Activated naive CD4-positive, alpha-beta T cell treated with anti-CD3 and anti-CD28 coated beads, Interleukin-2, amount 10 ng/mL, durations not matched to agents 7 days and 5 days (primary cell): ENCODE measurements at regions of chr15 and their contacts with region 1.

Region 1: GRCh38 chr15:73273181-73274002 is 95.4 kb downstream of the HCN4 start:
- DNase-seq: peak; percentile 58
- H3K4me3 Mint-ChIP-seq: no peak overlapping the region
- H3K27ac Mint-ChIP-seq: no peak overlapping the region
- H3K4me1 Mint-ChIP-seq: no peaks in the 10 kb centered on the region
- H3K27me3 Mint-ChIP-seq: no peaks in the 10 kb centered on the region

Region 2: DNA sequence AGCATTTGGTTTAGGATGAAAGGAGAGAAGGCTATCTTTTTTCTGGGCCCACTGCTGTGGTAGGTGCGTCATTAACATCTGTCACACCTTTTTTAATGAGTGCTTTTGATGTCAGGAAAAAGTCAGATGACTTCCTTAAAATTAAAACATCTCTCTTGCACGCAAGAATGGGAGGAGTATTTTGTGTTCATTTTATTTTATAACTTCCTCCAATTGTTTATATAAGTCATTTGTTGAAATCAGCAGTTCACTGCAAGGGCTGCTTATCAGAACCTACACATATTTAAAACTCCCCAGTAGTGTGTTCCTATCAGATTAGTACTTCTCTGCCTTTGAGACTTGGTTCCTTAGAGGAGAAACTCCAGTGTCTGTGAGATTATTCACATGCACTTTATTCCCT is 77.3 kb before region 1 on chr15:
- CTCF ChIA-PET with region 1: no interaction called
- DNase-seq: no peak
- H3K4me3 Mint-ChIP-seq: no peak overlapping the region
- H3K27ac Mint-ChIP-seq: no peak overlapping the region
- H3K4me1 Mint-ChIP-seq: peaks cover 4% of the 10 kb centered on the region
- H3K27me3 Mint-ChIP-seq: peaks cover 3% of the 10 kb centered on the region

Region 3: GRCh38 chr15:73240866-73241499 is 32.4 kb before region 1 on chr15:
- CTCF ChIA-PET with region 1: interaction called, 20 read pairs
- DNase-seq: peak; percentile 82
- H3K4me3 Mint-ChIP-seq: no peak overlapping the region
- H3K27ac Mint-ChIP-seq: no peak overlapping the region
- H3K4me1 Mint-ChIP-seq: no peaks in the 10 kb centered on the region
- H3K27me3 Mint-ChIP-seq: no peaks in the 10 kb centered on the region

Region 4: DNA sequence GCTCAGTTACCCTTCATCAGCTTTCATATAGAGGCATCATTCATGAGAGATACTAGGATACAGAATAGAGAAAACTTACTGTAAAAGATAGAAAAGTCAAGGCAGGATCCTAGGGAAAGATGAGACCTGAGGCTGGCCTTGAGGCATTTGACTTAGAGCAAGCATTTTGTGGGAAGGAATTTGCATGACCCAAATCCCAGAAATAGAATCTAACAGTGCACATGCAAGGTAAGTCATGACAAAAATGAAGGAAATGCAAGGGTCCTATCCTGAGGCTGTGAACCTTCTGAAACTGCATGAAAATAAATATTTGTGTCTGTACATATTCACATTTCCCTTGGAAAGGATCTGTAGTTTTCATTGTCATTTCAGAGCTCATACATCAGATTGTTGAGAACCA is 27.0 kb before region 1 on chr15:
- CTCF ChIA-PET with region 1: interaction called, 20 read pairs
- DNase-seq: no peak
- H3K4me3 Mint-ChIP-seq: no peak overlapping the region
- H3K27ac Mint-ChIP-seq: no peak overlapping the region
- H3K4me1 Mint-ChIP-seq: no peaks in the 10 kb centered on the region
- H3K27me3 Mint-ChIP-seq: no peaks in the 10 kb centered on the region